ENCODE measurements at regions of chr1 and their contacts with region 1.

Region 1: GRCh38 chr1:223081181-223081994 is 61.7 kb downstream of the TLR5 start:
- DNase-seq: peak; percentile 55 to 90
- H3K4me3 ChIP-seq: peak overlapping the region; percentile 51 to 58
- H3K27ac ChIP-seq: peak overlapping the region; percentile 60 to 67
- H3K4me1 ChIP-seq: no peaks in the 10 kb centered on the region
- H3K27me3 ChIP-seq: no peaks in the 10 kb centered on the region
- CTCF ChIP-seq: peak; percentile 92 to 98 (median 98)

Region 2: DNA sequence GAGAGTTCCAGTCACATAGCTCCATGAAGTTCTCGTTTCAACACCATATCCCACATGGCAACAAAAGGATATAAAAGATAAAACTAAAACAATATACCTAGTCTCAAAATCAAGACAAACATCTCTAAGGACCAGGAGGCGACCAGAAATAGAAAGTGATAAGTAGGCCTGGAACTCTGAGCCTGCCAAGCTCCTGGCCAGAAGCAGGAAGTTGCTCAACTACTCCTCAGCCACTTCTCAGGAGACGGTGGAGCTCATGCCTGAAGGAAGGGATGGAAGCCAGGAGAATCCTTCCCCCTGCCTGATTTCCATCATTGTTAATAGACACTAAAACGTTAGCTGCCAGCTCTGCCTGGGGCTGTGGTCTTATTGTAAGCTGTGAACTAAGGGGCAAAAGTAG is 171.8 kb before region 1 on chr1:
- intact Hi-C with region 1: no loop called
- DNase-seq: peak in 1 of 2 donors; percentile 66
- H3K4me3 ChIP-seq: no peak overlapping the region
- H3K27ac ChIP-seq: peak overlapping the region; percentile 28 to 67
- H3K4me1 ChIP-seq: peaks cover 0 to 4% of the 10 kb centered on the region in 2 donors
- H3K27me3 ChIP-seq: no peaks in the 10 kb centered on the region
- CTCF ChIP-seq: no peak

Region 3: DNA sequence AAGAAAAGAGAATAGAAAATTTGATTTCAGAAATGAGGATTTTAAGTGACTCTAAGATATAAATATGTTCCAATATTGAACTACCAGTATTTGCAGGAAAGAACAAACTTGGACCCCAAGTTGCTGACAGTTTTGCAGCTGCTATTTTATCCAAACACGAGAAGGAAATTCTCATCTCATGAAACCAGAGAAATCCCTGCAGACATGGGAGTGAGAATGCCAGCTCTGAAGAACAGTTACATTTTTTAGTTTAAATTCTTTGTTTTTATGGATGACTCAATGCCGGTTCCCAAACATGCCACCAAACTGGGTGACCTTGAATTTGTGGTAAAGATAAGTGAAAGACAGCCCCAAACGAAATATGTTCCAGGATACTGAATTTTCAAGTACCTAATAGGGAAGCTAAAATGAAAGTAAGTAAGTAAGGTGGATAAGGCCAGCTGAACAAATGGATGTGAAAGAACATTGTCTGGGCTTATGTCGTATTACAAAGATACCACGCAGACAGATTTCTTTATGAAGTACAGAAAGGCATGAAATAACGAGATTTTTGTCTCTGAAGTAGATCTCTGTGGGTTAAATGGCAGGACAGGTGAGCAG is 41.7 kb after region 1 on chr1:
- intact Hi-C with region 1: loop called (anchors 5 kb)
- DNase-seq: no peak
- H3K4me3 ChIP-seq: peak overlapping the region; percentile 46 to 56
- H3K27ac ChIP-seq: peak overlapping the region; percentile 5 to 15
- H3K4me1 ChIP-seq: no peaks in the 10 kb centered on the region
- H3K27me3 ChIP-seq: no peaks in the 10 kb centered on the region
- CTCF ChIP-seq: no peak